GM10248 (cell line): ENCODE measurements at regions of chr10 and their contacts with region 1.

Region 1: GRCh38 chr10:71383972-71384687 is 12.6 kb upstream of the CDH23 start:
- DNase-seq: peak; percentile 79
- CTCF ChIP-seq: peak; percentile 98

Region 2: GRCh38 chr10:71371750-71372166 is 12.4 kb before region 1 on chr10:
- CTCF ChIA-PET with region 1: interaction called, 45 read pairs
- POLR2A ChIA-PET with region 1: no interaction called
- DNase-seq: peak; percentile 45
- CTCF ChIP-seq: no peak

Region 3: DNA sequence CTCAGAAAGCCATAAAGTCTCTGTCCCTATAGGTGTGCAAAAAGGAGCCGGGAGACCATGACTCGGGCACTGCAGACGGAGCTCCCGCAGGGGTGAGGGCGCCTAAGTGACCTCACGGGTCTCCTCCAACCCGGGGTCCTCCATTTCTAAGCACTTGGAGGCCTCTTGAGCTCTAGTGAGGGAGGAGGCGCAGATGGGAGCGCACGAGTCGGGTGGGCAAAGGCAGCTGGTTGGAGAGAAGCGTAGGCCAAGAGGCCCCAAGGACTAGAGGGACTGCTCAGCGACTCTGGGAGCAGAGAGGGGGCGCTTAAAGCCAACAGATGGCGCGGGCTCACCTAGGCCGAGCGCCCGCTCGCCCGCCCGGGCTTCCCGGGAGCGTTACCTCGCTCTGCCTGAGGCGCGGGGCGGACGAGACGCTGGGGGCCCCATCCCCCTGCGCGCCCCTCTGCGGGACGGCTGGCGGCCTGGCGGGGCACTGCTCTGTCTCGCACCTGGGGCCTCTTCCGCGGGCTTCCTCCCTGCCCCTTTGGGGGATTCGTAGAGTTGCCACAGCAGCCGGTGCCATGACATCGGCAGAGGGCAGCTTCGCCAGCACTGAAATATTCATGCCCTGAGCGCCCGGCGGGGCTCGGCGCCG is 12.1 kb after region 1 on chr10:
- CTCF ChIA-PET with region 1: interaction called, 12 read pairs
- POLR2A ChIA-PET with region 1: no interaction called
- DNase-seq: peak; percentile 56
- CTCF ChIP-seq: peak; percentile 33

Region 4: GRCh38 chr10:71462062-71462935 is 78.2 kb after region 1 on chr10:
- CTCF ChIA-PET with region 1: no interaction called
- POLR2A ChIA-PET with region 1: no interaction called
- DNase-seq: no peak
- CTCF ChIP-seq: no peak